ENCODE measurements at regions of chr1 and their contacts with region 1.

Region 1: GRCh38 chr1:45803301-45803780 is at the start of gene MAST2:
- DNase-seq: peak; percentile 81 to 97
- H3K4me3 ChIP-seq: peak within 1 kb of the TSS; percentile 23
- CTCF ChIP-seq: no peak
- POLR2A ChIP-seq: no peak
- total RNA-seq, gene MAST2: 6.6 to 22.6 (median 13.9) TPM

Region 2: GRCh38 chr1:45051005-45051772 is 752.2 kb before region 1 on chr1:
- intact Hi-C with region 1: no loop called
- DNase-seq: no peak
- H3K4me3 ChIP-seq: no peak overlapping the region
- CTCF ChIP-seq: no peak
- POLR2A ChIP-seq: no peak

Region 3: GRCh38 chr1:45746922-45747321 is 56.4 kb before region 1 on chr1:
- intact Hi-C with region 1: no loop called
- DNase-seq: no peak
- H3K4me3 ChIP-seq: no peak overlapping the region
- CTCF ChIP-seq: no peak
- POLR2A ChIP-seq: no peak

Region 4: GRCh38 chr1:45785583-45785982 is 17.8 kb before region 1 on chr1:
- intact Hi-C with region 1: loop called (anchors 1 kb)
- DNase-seq: no peak
- H3K4me3 ChIP-seq: no peak overlapping the region
- CTCF ChIP-seq: no peak
- POLR2A ChIP-seq: no peak

Region 5: DNA sequence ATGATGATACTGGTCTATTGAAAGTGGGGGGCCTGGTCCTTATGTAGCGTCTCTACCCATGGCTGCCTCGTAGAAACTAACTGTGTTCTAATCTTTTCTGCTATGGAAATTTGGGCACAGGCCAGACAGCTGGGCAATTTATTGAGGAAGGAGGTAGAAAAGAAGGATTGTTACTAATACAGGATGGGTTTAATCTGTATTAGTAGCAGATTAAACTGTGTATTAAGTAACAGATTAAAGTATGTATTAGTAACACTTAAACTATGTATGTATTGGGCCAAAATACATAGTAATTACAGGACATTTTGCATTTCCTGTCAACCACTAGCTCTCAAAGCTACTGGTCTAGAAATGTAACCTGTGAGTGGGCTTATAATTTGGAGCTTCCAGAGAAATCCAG is 142.1 kb after region 1 on chr1:
- intact Hi-C with region 1: no loop called
- DNase-seq: no peak
- H3K4me3 ChIP-seq: no peak overlapping the region
- CTCF ChIP-seq: no peak
- POLR2A ChIP-seq: no peak